ENCODE measurements at regions of chr5 and their contacts with region 1.

Region 1: GRCh38 chr5:141512390-141512910 is 23.6 kb downstream of the PCDHGC5 start:
- DNase-seq: peak; percentile 94

Region 2: GRCh38 chr5:141475625-141476131 is 36.8 kb before region 1 on chr5 and contains the start of gene PCDHGC3:
- intact Hi-C with region 1: loop called in 1 of 2 experiments (anchors 5 kb)
- DNase-seq: peak; percentile 97
- total RNA-seq, gene PCDHGC3: 71.1 to 90.6 TPM

Region 3: GRCh38 chr5:141934099-141934844 is 421.8 kb after region 1 on chr5:
- intact Hi-C with region 1: no loop called
- DNase-seq: no peak